ENCODE measurements at regions of chr6 and their contacts with region 1.

Region 1: GRCh38 chr6:149565527-149566409 is at the start of gene GINM1:
- DNase-seq: peak; percentile 95
- H3K4me3 Mint-ChIP-seq: peak within 1 kb of the TSS; percentile 87
- H3K27ac Mint-ChIP-seq: peak within 1 kb of the TSS; percentile 61
- H3K4me1 Mint-ChIP-seq: peaks cover 7% of the 10 kb centered on the region
- H3K27me3 Mint-ChIP-seq: no peaks in the 10 kb centered on the region
- CTCF ChIP-seq: peak; percentile 61
- total RNA-seq, gene GINM1: 27.7 and 29.6 TPM in 2 replicates

Region 2: GRCh38 chr6:149642829-149643580 is 77.2 kb after region 1 on chr6:
- CTCF ChIA-PET with region 1: interaction called, 3 read pairs
- POLR2A ChIA-PET with region 1: interaction called, 28 read pairs
- intact Hi-C with region 1: loop called (anchors 1 kb)
- DNase-seq: no peak
- H3K4me3 Mint-ChIP-seq: no peak overlapping the region
- H3K27ac Mint-ChIP-seq: no peak overlapping the region
- H3K4me1 Mint-ChIP-seq: peaks cover 16% of the 10 kb centered on the region
- H3K27me3 Mint-ChIP-seq: no peaks in the 10 kb centered on the region
- CTCF ChIP-seq: no peak

Region 3: DNA sequence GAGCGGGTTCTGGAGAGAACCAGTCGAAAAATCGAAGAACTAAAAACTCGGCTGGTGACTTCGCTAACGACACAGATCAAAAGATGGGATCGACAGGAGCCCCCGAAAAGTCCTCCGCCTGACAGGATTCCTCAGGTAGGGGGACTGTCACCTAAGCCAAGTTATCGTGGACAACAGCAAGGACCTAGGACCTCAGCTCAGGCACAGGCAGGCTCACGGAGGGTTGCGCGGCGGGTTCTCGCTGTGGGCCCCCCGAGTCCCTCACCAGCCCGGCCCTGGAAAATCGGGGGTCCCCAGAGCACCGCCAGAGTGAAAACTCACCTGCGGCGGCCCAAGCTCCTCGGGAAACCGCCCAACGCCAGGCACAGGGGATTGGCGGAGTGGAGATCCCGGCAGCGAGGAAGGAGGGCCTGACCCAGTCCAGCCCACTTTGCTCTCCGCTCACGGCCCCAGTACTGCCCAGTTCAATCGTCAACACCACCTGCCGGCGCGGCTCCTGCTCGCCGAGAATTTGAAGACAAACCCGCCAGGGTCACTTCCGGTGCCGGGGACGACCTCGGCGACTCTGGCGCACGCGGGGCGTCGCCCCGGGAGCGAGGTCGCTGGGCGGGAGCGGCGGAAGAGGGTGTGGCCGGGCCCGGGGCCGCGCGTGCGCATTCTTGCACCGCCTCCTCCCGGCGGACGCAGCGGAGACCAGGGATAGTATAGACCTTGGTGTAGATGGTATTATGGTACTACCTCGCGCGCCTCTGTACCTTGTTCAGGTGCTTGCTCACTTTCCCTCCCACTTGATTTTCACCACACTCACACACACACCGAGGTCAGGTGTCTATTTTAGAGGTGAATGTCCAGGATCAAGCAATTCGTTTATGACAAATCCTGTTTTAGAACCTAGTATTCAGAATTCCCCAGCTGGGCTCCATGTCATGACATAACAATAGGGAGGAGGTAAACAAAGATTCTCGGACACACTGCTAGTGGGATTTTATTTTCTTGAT is 82.7 kb after region 1 on chr6 and contains the start of gene KATNA1:
- CTCF ChIA-PET with region 1: interaction called, 3 read pairs
- POLR2A ChIA-PET with region 1: interaction called, 28 read pairs
- intact Hi-C with region 1: loop called (anchors 1 kb)
- DNase-seq: peak; percentile 93
- H3K4me3 Mint-ChIP-seq: peak within 1 kb of the TSS; percentile 85
- H3K27ac Mint-ChIP-seq: peak within 1 kb of the TSS; percentile 82
- H3K4me1 Mint-ChIP-seq: peaks cover 6% of the 10 kb centered on the region
- H3K27me3 Mint-ChIP-seq: no peaks in the 10 kb centered on the region
- CTCF ChIP-seq: no peak
- total RNA-seq, gene KATNA1: 23.2 and 25.8 TPM in 2 replicates

Measured in MCF 10A (cell line).